ENCODE measurements at regions of chr12 and their contacts with region 1.

Region 1: GRCh38 chr12:46843811-46844210 is 18.0 kb upstream of the SLC38A4 start:
- DNase-seq: no peak
- ATAC-seq: no peak
- H3K4me3 ChIP-seq: no peak overlapping the region
- H3K27ac ChIP-seq: no peak overlapping the region
- H3K4me1 ChIP-seq: no peaks in the 10 kb centered on the region
- H3K27me3 ChIP-seq: no peaks in the 10 kb centered on the region
- CTCF ChIP-seq: no peak
- POLR2A ChIP-seq: no peak
- RAD21 ChIP-seq: no peak

Region 2: DNA sequence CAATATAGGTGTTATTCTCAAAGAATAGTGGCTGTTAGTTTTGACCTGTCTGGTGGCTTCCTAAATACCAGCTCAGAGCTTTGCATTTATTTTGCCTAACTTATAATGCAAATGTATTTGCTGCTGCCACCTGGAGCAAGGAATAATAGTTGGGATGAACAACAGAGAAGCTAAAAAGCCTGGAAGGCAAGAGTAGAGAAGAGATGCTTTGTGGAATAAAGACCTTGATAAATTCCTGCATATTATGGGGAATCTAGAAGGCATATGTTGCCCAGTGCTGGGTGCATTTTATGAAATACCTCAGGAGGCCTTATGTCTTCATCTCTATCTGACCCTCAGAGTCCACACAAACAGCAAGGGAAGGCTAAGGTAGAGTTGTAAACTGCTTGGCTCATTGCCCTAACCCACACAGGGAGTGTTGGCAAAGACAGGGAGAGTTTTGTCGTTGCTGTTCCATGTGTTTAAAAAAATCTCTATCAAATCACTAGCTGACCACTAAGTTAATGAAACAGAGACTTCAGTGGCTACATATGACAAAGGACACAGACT is 799.8 kb before region 1 on chr12:
- CTCF ChIA-PET with region 1: no interaction called
- POLR2A ChIA-PET with region 1: no interaction called
- RAD21 ChIA-PET with region 1: no interaction called
- intact Hi-C with region 1: no loop called
- DNase-seq: no peak
- ATAC-seq: no peak
- H3K4me3 ChIP-seq: no peak overlapping the region
- H3K27ac ChIP-seq: no peak overlapping the region
- H3K4me1 ChIP-seq: no peaks in the 10 kb centered on the region
- H3K27me3 ChIP-seq: no peaks in the 10 kb centered on the region
- CTCF ChIP-seq: no peak
- POLR2A ChIP-seq: no peak
- RAD21 ChIP-seq: no peak

Region 3: GRCh38 chr12:46459861-46460545 is 383.8 kb before region 1 on chr12:
- CTCF ChIA-PET with region 1: no interaction called
- POLR2A ChIA-PET with region 1: no interaction called
- RAD21 ChIA-PET with region 1: no interaction called
- intact Hi-C with region 1: no loop called
- DNase-seq: no peak
- ATAC-seq: no peak
- H3K4me3 ChIP-seq: no peak overlapping the region
- H3K27ac ChIP-seq: no peak overlapping the region
- H3K4me1 ChIP-seq: peaks cover 49 to 68% of the 10 kb centered on the region in 2 experiments
- H3K27me3 ChIP-seq: no peaks in the 10 kb centered on the region
- CTCF ChIP-seq: no peak
- POLR2A ChIP-seq: no peak
- RAD21 ChIP-seq: no peak

Region 4: GRCh38 chr12:46874642-46875041 is 30.8 kb after region 1 on chr12:
- CTCF ChIA-PET with region 1: no interaction called
- POLR2A ChIA-PET with region 1: no interaction called
- RAD21 ChIA-PET with region 1: no interaction called
- intact Hi-C with region 1: loop called (anchors 1 kb)
- DNase-seq: no peak
- ATAC-seq: no peak
- H3K4me3 ChIP-seq: no peak overlapping the region
- H3K27ac ChIP-seq: no peak overlapping the region
- H3K4me1 ChIP-seq: no peaks in the 10 kb centered on the region
- H3K27me3 ChIP-seq: no peaks in the 10 kb centered on the region
- CTCF ChIP-seq: no peak
- POLR2A ChIP-seq: no peak
- RAD21 ChIP-seq: no peak

Measured in HCT116 (cell line).